GM12878 (cell line): ENCODE measurements at regions of chr6 and their contacts with region 1.

Region 1: GRCh38 chr6:42532038-42532669 is 31.7 kb upstream of the UBR2 start:
- DNase-seq: no peak
- ATAC-seq: peak; percentile 92
- H3K4me3 ChIP-seq: no peak overlapping the region
- H3K27ac ChIP-seq: no peak overlapping the region
- H3K4me1 ChIP-seq: no peaks in the 10 kb centered on the region
- H3K27me3 ChIP-seq: no peaks in the 10 kb centered on the region
- CTCF ChIP-seq: peak; percentile 74 to 89 (median 75)
- EP300 ChIP-seq: no peak
- POLR2A ChIP-seq: no peak
- RAD21 ChIP-seq: peak; percentile 84

Region 2: DNA sequence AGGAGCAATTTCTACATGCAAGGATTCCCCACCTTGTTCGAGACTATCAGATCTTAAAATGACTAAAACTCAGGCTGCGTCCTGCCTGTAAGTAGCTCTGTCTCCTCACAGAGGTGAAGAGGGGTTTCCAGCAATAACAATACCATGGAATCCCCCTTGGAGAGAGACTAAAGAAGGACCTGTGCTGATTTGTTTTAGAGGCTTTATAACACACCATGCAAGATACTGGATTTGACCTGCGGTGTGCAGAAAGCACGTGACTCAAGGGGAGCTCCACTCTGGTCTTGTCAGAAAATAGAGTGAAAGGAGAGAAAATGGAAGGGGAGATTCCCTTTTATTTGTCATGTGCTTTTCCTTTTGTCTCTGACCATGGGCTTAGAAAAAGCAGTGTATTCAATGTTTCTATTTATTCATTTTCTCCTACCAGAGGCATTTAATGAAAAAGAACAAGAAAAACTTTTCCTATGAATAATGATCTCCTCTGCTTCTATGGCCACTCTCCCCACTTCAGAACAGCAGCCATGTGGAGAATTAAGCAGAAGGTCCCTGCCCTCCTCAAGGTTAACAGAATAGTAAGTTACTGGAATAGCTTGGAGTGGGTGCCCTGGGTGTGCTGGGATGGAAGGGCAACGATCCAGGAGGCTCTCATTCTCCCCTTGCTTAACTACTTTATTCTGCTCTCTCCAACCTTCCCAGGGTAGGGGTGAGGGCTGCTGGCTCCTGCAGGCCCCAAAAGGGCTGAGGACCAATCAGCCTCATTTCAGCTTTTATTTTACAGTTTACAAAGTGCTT is 295.3 kb before region 1 on chr6:
- CTCF ChIA-PET with region 1: interaction called, 13 read pairs
- POLR2A ChIA-PET with region 1: no interaction called
- RAD21 ChIA-PET with region 1: no interaction called
- SMC1A ChIA-PET with region 1: no interaction called
- in situ Hi-C with region 1: no loop called
- intact Hi-C with region 1: no loop called
- DNase-seq: peak; percentile 41
- ATAC-seq: peak; percentile 90
- H3K4me3 ChIP-seq: peak overlapping the region; percentile 23; the same call in 1 of the 2 replicates
- H3K27ac ChIP-seq: peak overlapping the region; percentile 68
- H3K4me1 ChIP-seq: peaks cover 36% of the 10 kb centered on the region
- H3K27me3 ChIP-seq: no peaks in the 10 kb centered on the region
- CTCF ChIP-seq: no peak
- EP300 ChIP-seq: peak; percentile 8 to 26; a peak in 2 of 4 replicates
- POLR2A ChIP-seq: no peak
- RAD21 ChIP-seq: peak; percentile 10; the same call in 1 of the 2 replicates

Region 3: DNA sequence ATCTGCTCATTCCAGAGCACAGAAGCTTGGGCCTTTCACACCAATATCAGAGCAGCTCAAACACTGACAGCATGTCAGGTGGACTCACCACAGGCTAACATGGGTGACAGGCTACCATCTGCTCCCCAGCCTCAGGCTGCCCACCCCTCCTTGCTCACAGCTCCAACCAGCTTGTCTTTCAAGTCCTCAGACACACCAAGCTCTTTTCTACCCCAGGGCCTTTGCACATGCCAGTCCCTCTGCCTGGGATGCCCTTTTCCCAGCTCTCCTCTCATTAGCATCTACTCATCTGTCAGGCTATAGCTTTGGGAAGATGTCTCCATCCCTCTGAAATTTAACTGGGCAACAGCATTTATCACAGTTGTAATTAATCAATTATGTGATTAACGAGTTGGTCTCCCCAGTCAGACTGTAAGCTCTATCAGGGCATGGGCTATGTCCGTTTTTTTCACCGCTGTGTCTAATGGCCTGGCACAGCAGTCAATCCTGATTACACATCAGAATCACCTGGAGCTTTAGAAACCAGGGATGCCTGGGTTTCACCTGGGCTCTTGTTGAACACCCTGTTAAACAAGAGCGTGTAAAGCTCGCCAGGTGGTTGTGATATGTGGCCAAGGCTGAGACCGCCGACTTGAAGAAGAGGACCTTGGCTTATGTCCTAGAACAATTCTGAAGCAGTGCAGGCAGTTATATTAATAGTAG is 225.6 kb before region 1 on chr6:
- CTCF ChIA-PET with region 1: interaction called, 23 read pairs
- POLR2A ChIA-PET with region 1: no interaction called
- RAD21 ChIA-PET with region 1: interaction called, 3 read pairs
- SMC1A ChIA-PET with region 1: interaction called, 6 read pairs
- in situ Hi-C with region 1: no loop called
- intact Hi-C with region 1: loop called (anchors 5 kb)
- DNase-seq: no peak
- ATAC-seq: no peak
- H3K4me3 ChIP-seq: no peak overlapping the region
- H3K27ac ChIP-seq: no peak overlapping the region
- H3K4me1 ChIP-seq: no peaks in the 10 kb centered on the region
- H3K27me3 ChIP-seq: no peaks in the 10 kb centered on the region
- CTCF ChIP-seq: no peak
- EP300 ChIP-seq: no peak
- POLR2A ChIP-seq: no peak
- RAD21 ChIP-seq: no peak

Region 4: DNA sequence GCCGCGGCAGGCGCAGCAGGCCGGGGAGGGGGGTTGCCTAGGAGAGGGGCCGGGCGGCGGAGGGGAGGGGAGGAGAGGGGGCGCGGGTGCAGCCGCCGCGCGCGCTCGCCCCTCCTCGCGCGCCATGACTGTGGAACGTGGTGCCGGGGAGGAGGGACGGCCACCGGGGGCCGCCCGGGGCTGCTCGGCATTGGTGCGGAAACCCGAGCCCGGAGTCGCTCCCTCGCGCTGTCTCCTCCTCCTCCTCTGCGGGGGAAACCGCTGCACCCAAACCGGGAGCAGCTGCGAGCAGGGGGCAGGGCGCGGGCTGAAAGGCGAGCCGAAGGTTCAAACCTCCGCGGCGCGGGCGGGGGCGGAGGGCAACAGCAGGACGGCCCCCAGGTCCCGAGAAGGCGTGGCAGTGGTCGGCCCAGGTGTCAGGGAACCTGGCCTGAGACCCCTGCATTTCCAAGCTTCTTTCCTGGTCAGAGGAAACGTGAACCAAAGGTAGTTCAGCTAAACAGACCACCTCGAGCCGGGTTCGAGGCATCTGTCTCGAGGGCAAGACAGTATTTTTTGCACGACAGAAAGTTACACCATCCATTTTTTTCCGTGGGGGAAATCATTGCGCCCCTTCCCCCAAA is 79.0 kb before region 1 on chr6:
- CTCF ChIA-PET with region 1: interaction called, 18 read pairs
- POLR2A ChIA-PET with region 1: interaction called, 10 read pairs
- RAD21 ChIA-PET with region 1: interaction called, 6 read pairs
- SMC1A ChIA-PET with region 1: interaction called, 21 read pairs
- in situ Hi-C with region 1: no loop called
- intact Hi-C with region 1: no loop called
- DNase-seq: peak; percentile 51
- ATAC-seq: peak; percentile 88
- H3K4me3 ChIP-seq: peak overlapping the region; percentile 85
- H3K27ac ChIP-seq: peak overlapping the region; percentile 68
- H3K4me1 ChIP-seq: peaks cover 12% of the 10 kb centered on the region
- H3K27me3 ChIP-seq: no peaks in the 10 kb centered on the region
- CTCF ChIP-seq: no peak; a peak in 1 of 6 replicates
- EP300 ChIP-seq: 0 out of 4 replicates have a peak, but pooled peaks have one; percentile 2
- POLR2A ChIP-seq: peak; percentile 77
- RAD21 ChIP-seq: peak; percentile 20; the same call in 1 of the 2 replicates

Region 5: DNA sequence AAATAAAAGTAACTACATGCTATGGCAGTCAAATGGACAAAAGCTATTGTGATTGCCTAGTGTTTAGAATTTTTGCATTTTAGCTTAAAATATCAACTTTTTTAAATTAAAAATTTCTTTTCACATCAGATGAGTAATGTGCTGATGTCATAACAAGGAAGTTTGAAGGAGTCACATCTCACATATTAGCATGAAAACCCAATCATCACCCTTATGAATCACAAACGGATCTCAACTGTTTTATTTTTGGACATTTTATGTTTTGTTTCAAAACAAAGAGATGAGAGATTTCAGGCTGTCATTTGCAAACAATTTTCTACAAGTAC is 26.8 kb before region 1 on chr6:
- CTCF ChIA-PET with region 1: interaction called, 36 read pairs
- POLR2A ChIA-PET with region 1: interaction called, 5 read pairs
- RAD21 ChIA-PET with region 1: interaction called, 30 read pairs
- SMC1A ChIA-PET with region 1: interaction called, 50 read pairs
- in situ Hi-C with region 1: no loop called
- intact Hi-C with region 1: no loop called
- DNase-seq: no peak
- ATAC-seq: peak; percentile 36
- H3K4me3 ChIP-seq: no peak overlapping the region
- H3K27ac ChIP-seq: peak overlapping the region; percentile 54
- H3K4me1 ChIP-seq: peaks cover 52% of the 10 kb centered on the region
- H3K27me3 ChIP-seq: no peaks in the 10 kb centered on the region
- CTCF ChIP-seq: no peak
- EP300 ChIP-seq: no peak
- POLR2A ChIP-seq: no peak
- RAD21 ChIP-seq: no peak

Region 6: GRCh38 chr6:42520786-42521607 is 11.2 kb before region 1 on chr6:
- CTCF ChIA-PET with region 1: interaction called, 61 read pairs
- POLR2A ChIA-PET with region 1: no interaction called
- RAD21 ChIA-PET with region 1: interaction called, 8 read pairs
- SMC1A ChIA-PET with region 1: interaction called, 54 read pairs
- in situ Hi-C with region 1: no loop called
- intact Hi-C with region 1: no loop called
- DNase-seq: peak; percentile 74
- ATAC-seq: peak; percentile 91
- H3K4me3 ChIP-seq: no peak overlapping the region
- H3K27ac ChIP-seq: peak overlapping the region; percentile 72
- H3K4me1 ChIP-seq: peaks cover 15% of the 10 kb centered on the region
- H3K27me3 ChIP-seq: no peaks in the 10 kb centered on the region
- CTCF ChIP-seq: no peak
- EP300 ChIP-seq: peak in 1 of 2 experiments; percentile 34; a peak in 1 of 4 replicates
- POLR2A ChIP-seq: 0 out of 2 replicates have a peak, but pooled peaks have one; percentile 37
- RAD21 ChIP-seq: no peak